Naive thymus-derived CD4-positive, alpha-beta T cell (primary cell): ENCODE measurements at regions of chr6 and their contacts with region 1.

Region 1: DNA sequence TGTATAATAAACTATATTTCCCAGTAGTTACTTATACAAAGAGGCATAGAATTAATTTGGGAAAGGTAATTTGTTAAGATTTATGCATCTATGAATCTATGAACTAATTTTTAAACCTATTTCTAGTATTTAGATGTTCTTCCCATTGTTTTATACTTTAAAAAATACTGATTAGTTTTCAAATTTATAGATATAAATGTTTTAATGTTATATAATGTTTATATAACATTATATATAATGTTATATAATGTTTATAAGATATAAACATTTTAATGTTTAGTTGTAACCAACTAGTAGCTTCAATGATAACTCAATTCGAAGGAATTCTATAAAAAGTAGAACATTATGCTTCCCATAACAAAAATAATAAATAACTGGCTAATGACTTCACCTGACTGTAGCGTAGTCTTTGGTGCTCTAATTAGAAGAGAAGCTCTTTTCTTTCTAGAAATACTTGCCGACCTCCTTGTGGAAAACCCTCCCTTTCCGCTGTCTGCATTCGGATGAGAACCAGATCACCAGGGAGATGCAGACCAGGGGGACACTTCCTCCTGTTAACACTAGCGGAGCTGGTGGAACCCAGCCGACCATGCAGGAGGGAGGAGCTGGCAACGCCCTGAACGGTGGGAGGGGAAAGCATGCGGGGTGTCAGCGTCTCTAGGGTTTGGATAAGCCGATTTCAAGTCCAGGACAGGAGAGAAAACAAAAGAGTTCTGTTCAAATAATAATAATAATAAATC is 158.4 kb downstream of the OR2B2 start:
- DNase-seq: peak in 8 of 9 donors; percentile 38 to 69 (median 45)
- ATAC-seq: peak; percentile 22
- H3K4me3 ChIP-seq: peak overlapping the region; percentile 80
- H3K4me3 Mint-ChIP-seq: peak overlapping the region; percentile 81 to 99 (median 94)
- H3K27ac ChIP-seq: peak overlapping the region; percentile 96
- H3K27ac Mint-ChIP-seq: peak overlapping the region; percentile 84 to 100 (median 97)
- H3K4me1 ChIP-seq: peaks cover 6 to 20% of the 10 kb centered on the region in 2 donors
- H3K4me1 Mint-ChIP-seq: peaks cover 17 to 53% (median 39%) of the 10 kb centered on the region in 7 donors
- H3K27me3 ChIP-seq: no peaks in the 10 kb centered on the region
- H3K27me3 Mint-ChIP-seq: peaks cover 0 to 8% (median 0%) of the 10 kb centered on the region in 5 donors

Region 2: GRCh38 chr6:25821341-25821740 is 1932.5 kb before region 1 on chr6:
- CTCF ChIA-PET with region 1: no interaction called
- POLR2A ChIA-PET with region 1: no interaction called
- intact Hi-C with region 1: no loop called
- DNase-seq: no peak
- ATAC-seq: no peak
- H3K4me3 ChIP-seq: no peak overlapping the region
- H3K4me3 Mint-ChIP-seq: no peak overlapping the region
- H3K27ac ChIP-seq: no peak overlapping the region
- H3K27ac Mint-ChIP-seq: no peak overlapping the region
- H3K4me1 ChIP-seq: no peaks in the 10 kb centered on the region
- H3K4me1 Mint-ChIP-seq: peaks cover 0 to 4% (median 0%) of the 10 kb centered on the region in 7 donors
- H3K27me3 ChIP-seq: no peaks in the 10 kb centered on the region
- H3K27me3 Mint-ChIP-seq: peaks cover 13 to 31% (median 29%) of the 10 kb centered on the region in 5 donors

Region 3: DNA sequence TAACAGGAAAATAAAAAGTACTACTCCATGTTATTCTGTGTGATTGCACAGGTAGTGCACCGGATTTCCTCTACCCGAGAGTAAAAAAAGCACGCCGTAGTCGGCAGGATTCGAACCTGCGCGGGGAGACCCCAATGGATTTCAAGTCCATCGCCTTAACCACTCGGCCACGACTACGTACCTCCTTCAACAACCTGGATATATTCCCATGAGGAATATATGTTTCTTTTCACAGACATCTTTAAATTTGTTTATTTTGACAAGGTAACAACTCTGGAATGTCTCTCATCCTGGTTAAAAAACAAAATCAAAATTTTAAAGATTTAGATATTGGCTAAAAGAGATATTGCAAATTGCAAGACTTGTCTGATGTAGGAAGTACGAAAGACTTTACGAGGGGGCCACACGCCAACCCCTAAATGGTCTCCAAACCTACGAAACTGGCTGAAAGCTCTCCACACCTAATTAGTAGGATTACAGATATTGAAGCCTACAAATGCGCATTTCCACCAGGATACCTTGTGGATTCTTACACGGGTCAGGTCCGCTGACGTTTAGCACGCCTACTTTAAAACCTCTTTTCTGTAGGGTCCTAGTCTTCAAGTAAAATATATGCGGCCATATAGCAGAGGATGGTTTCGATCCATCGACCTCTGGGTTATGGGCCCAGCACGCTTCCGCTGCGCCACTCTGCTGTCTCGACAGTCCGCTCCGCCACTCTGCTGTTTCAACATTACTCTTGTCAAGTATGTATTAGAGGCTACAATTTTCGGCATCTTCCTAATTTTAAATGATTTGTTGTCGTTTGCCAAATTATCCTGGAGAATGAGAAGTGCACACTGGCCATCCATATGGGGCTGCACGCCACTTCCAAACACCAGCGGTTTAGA is 1441.1 kb before region 1 on chr6:
- CTCF ChIA-PET with region 1: no interaction called
- POLR2A ChIA-PET with region 1: no interaction called
- intact Hi-C with region 1: loop called in 1 of 2 experiments (anchors 2 kb)
- DNase-seq: peak; percentile 64 to 91 (median 86)
- ATAC-seq: peak; percentile 75
- H3K4me3 ChIP-seq: peak overlapping the region; percentile 81
- H3K4me3 Mint-ChIP-seq: peak overlapping the region; percentile 83 to 100 (median 96)
- H3K27ac ChIP-seq: peak overlapping the region; percentile 55
- H3K27ac Mint-ChIP-seq: peak overlapping the region; percentile 82 to 100 (median 96)
- H3K4me1 ChIP-seq: peaks cover 4 to 19% of the 10 kb centered on the region in 2 donors
- H3K4me1 Mint-ChIP-seq: peaks cover 5 to 51% (median 37%) of the 10 kb centered on the region in 7 donors
- H3K27me3 ChIP-seq: no peaks in the 10 kb centered on the region
- H3K27me3 Mint-ChIP-seq: peaks cover 0 to 8% (median 0%) of the 10 kb centered on the region in 5 donors

Region 4: GRCh38 chr6:27312146-27312949 is 441.5 kb before region 1 on chr6 and contains the start of gene POM121L2:
- CTCF ChIA-PET with region 1: interaction called, 11 read pairs
- POLR2A ChIA-PET with region 1: interaction called, 4 read pairs
- intact Hi-C with region 1: loop called (anchors 1 to 5 kb)
- DNase-seq: peak in 8 of 9 donors; percentile 26 to 61 (median 56)
- ATAC-seq: peak; percentile 66
- H3K4me3 ChIP-seq: peak within 1 kb of the TSS; percentile 80
- H3K4me3 Mint-ChIP-seq: peak within 1 kb of the TSS; percentile 76 to 86 (median 83)
- H3K27ac ChIP-seq: no peak within 1 kb of the TSS
- H3K27ac Mint-ChIP-seq: peak within 1 kb of the TSS in 2 of 9 donors; percentile 15 to 25
- H3K4me1 ChIP-seq: peaks cover 0 to 6% of the 10 kb centered on the region in 2 donors
- H3K4me1 Mint-ChIP-seq: peaks cover 0 to 13% (median 4%) of the 10 kb centered on the region in 7 donors
- H3K27me3 ChIP-seq: peaks cover 4 to 14% of the 10 kb centered on the region in 2 donors
- H3K27me3 Mint-ChIP-seq: peaks cover 63 to 81% (median 73%) of the 10 kb centered on the region in 5 donors
- total RNA-seq, gene POM121L2: not detected

Region 5: GRCh38 chr6:27518881-27519795 is 234.7 kb before region 1 on chr6:
- CTCF ChIA-PET with region 1: interaction called, 21 read pairs
- POLR2A ChIA-PET with region 1: interaction called, 8 read pairs
- intact Hi-C with region 1: loop called (anchors 1 kb)
- DNase-seq: peak; percentile 34 to 79 (median 68)
- ATAC-seq: peak; percentile 81
- H3K4me3 ChIP-seq: peak overlapping the region; percentile 96
- H3K4me3 Mint-ChIP-seq: peak overlapping the region; percentile 84 to 97 (median 91)
- H3K27ac ChIP-seq: peak overlapping the region; percentile 67
- H3K27ac Mint-ChIP-seq: peak overlapping the region; percentile 68 to 94 (median 84)
- H3K4me1 ChIP-seq: peaks cover 7 to 11% of the 10 kb centered on the region in 2 donors
- H3K4me1 Mint-ChIP-seq: peaks cover 0 to 31% (median 18%) of the 10 kb centered on the region in 7 donors
- H3K27me3 ChIP-seq: peaks cover 0 to 3% of the 10 kb centered on the region in 2 donors
- H3K27me3 Mint-ChIP-seq: peaks cover 0 to 40% (median 22%) of the 10 kb centered on the region in 5 donors

Region 6: GRCh38 chr6:27795697-27796494 is 42.1 kb after region 1 on chr6:
- CTCF ChIA-PET with region 1: interaction called, 10 read pairs
- POLR2A ChIA-PET with region 1: interaction called, 3 read pairs
- intact Hi-C with region 1: no loop called
- DNase-seq: peak in 8 of 9 donors; percentile 36 to 83 (median 78)
- ATAC-seq: peak; percentile 86
- H3K4me3 ChIP-seq: no peak overlapping the region
- H3K4me3 Mint-ChIP-seq: peak overlapping the region in 2 of 10 donors; percentile 30 to 42
- H3K27ac ChIP-seq: no peak overlapping the region
- H3K27ac Mint-ChIP-seq: peak overlapping the region in 6 of 9 donors; percentile 11 to 86 (median 38)
- H3K4me1 ChIP-seq: peaks cover 14 to 24% of the 10 kb centered on the region in 2 donors
- H3K4me1 Mint-ChIP-seq: peaks cover 12 to 49% (median 22%) of the 10 kb centered on the region in 7 donors
- H3K27me3 ChIP-seq: no peaks in the 10 kb centered on the region
- H3K27me3 Mint-ChIP-seq: peaks cover 7 to 13% (median 12%) of the 10 kb centered on the region in 5 donors

Region 7: DNA sequence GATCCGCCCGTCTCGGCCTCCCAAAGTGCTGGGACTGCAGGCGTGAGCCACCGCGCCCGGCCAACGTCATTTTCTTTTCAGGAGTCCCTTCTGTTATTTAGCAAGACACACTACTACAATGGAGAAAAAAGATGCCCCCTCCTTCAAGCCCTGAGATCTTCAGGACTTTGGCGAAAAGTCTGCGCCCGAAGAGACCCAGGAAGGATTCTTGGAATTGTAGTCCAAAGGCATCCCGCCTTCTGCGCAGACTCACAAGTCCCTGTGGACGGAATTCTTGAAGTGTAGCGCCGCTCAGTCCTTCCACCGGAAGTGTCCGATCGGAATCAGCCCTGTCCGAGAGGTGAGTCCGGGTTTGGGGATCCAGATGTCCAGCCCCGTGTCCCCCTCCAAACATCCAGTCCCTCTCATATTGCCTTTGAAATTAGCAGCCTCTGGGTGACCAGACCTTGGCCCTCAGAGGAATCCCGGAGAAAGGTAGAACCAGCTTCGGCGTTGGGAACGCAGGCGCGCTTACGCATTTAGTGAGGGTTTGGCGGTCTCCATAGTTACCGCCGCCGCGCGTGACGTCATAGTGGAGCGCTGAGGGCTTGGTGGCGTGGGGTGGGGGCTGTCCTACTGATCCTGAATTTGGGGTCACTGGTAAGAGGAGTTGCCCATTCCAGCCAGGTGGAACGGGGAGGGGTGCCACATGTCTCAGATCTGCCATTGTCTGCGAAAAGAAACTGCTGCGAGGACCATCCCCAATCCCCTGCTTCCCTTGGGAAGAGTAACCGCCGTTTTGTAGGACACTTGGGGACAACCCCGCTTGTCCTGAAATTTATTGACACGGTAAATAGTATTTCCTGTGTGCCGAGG is 327.0 kb after region 1 on chr6:
- CTCF ChIA-PET with region 1: no interaction called
- POLR2A ChIA-PET with region 1: no interaction called
- intact Hi-C with region 1: loop called in 1 of 2 experiments (anchors 1 kb)
- DNase-seq: peak; percentile 89 to 94 (median 93)
- ATAC-seq: peak; percentile 85
- H3K4me3 ChIP-seq: peak overlapping the region; percentile 99
- H3K4me3 Mint-ChIP-seq: peak overlapping the region; percentile 87 to 99 (median 98)
- H3K27ac ChIP-seq: peak overlapping the region; percentile 97
- H3K27ac Mint-ChIP-seq: peak overlapping the region; percentile 84 to 99 (median 98)
- H3K4me1 ChIP-seq: peaks cover 6 to 7% of the 10 kb centered on the region in 2 donors
- H3K4me1 Mint-ChIP-seq: peaks cover 12 to 27% (median 16%) of the 10 kb centered on the region in 7 donors
- H3K27me3 ChIP-seq: no peaks in the 10 kb centered on the region
- H3K27me3 Mint-ChIP-seq: peaks cover 0 to 3% (median 0%) of the 10 kb centered on the region in 5 donors

Region 8: GRCh38 chr6:28981833-28982475 is 1228.1 kb after region 1 on chr6:
- CTCF ChIA-PET with region 1: no interaction called
- POLR2A ChIA-PET with region 1: no interaction called
- intact Hi-C with region 1: loop called in 1 of 2 experiments (anchors 2 kb)
- DNase-seq: peak; percentile 48 to 89 (median 86)
- ATAC-seq: peak; percentile 81
- H3K4me3 ChIP-seq: peak overlapping the region; percentile 99
- H3K4me3 Mint-ChIP-seq: peak overlapping the region; percentile 85 to 100 (median 92)
- H3K27ac ChIP-seq: peak overlapping the region; percentile 47
- H3K27ac Mint-ChIP-seq: peak overlapping the region; percentile 87 to 100 (median 99)
- H3K4me1 ChIP-seq: peaks cover 7 to 18% of the 10 kb centered on the region in 2 donors
- H3K4me1 Mint-ChIP-seq: peaks cover 30 to 80% (median 66%) of the 10 kb centered on the region in 7 donors
- H3K27me3 ChIP-seq: no peaks in the 10 kb centered on the region
- H3K27me3 Mint-ChIP-seq: peaks cover 14 to 61% (median 36%) of the 10 kb centered on the region in 5 donors